H1 (cell line): ENCODE measurements at regions of chr19 and their contacts with region 1.

Region 1: GRCh38 chr19:9934132-9934950 is 2.0 kb downstream of the OLFM2 start:
- DNase-seq: peak; percentile 77 to 100
- H3K4me3 ChIP-seq: peak overlapping the region; percentile 67 to 83 (median 80); a peak in 5 of 8 replicates
- H3K27ac ChIP-seq: no peak overlapping the region
- H3K4me1 ChIP-seq: peaks cover 4 to 14% (median 6%) of the 10 kb centered on the region in 4 experiments
- H3K27me3 ChIP-seq: peaks cover 0 to 2% (median 0%) of the 10 kb centered on the region in 4 experiments; a peak in 2 of 7 replicates
- CTCF ChIP-seq: peak; percentile 94 to 97 (median 96)
- EP300 ChIP-seq: no peak; a peak in 1 of 3 replicates
- POLR2A ChIP-seq: 0 out of 3 replicates have a peak, but pooled peaks of 1 of the 2 experiments have one; percentile 29
- RAD21 ChIP-seq: peak; percentile 96 to 98

Region 2: DNA sequence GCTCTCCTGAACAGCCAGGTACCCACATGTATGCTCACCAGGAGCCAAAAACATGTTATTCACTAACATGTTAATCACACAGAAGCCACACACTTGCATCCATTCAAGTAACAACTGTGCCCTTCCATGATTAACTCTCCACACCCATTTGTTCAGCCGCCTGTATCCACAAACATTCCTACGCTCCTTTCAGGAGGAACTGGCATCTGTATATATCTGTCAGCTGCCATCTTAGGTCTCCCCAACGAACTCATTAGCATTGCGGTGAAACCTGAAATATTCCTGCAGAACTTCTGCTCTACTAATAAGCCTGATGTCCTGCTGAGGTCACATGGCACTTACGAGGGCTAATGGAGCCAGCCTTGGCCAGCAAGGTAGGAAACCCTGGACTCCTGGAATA is 31.0 kb before region 1 on chr19:
- CTCF ChIA-PET with region 1: no interaction called
- POLR2A ChIA-PET with region 1: no interaction called
- DNase-seq: no peak
- H3K4me3 ChIP-seq: no peak overlapping the region
- H3K27ac ChIP-seq: no peak overlapping the region
- H3K4me1 ChIP-seq: peaks cover 0 to 8% (median 6%) of the 10 kb centered on the region in 4 experiments; a peak in 4 of 7 replicates
- H3K27me3 ChIP-seq: no peaks in the 10 kb centered on the region
- CTCF ChIP-seq: no peak
- EP300 ChIP-seq: no peak
- POLR2A ChIP-seq: no peak
- RAD21 ChIP-seq: no peak

Region 3: DNA sequence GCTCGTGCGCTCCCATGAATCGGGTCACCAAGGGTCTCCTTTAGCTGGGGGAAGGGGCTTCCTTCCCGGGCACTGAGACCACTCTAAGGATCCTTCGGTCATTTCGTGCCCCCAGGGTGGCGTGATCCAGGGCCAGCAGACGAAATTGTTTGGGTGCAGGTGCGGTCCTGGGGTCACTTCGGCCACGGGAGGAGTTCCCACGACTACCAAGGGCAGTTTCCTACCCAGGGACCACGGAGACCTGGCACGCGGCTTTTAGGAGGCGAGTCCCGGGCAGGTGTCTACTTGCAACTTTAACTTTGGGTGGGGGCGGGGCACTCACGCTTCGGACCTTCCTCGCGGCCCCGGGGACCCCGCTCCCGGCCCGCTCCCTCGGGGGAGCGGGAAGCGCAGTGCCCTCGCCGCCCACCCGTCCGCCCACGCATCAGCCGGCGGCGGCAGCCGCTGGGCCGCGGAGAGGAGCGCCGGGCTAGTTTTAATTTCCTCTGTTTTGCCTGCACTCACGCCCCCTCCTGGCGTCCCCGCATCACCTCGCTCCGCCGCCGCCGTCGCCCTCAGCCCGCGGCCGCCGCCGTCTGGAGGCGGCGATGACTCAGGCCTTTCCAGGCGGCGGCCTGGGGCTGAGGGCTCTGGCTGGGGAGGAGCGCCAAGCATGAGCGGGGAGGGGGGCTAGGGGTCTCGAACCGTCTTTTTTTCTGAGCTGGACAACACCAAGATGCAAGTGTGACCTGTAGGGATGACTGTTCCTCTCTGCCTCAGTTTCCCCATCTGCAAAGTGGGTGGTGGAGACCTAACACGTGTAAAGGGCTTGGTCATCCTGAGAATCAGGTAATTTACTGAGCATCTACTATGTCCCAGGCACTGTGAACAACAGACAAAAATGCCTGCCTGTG is 19.8 kb before region 1 on chr19:
- CTCF ChIA-PET with region 1: interaction called, 24 read pairs
- POLR2A ChIA-PET with region 1: interaction called, 4 read pairs
- DNase-seq: peak in 1 of 2 experiments; percentile 90
- H3K4me3 ChIP-seq: peak overlapping the region; percentile 37 to 78 (median 42)
- H3K27ac ChIP-seq: peak overlapping the region; percentile 46; the same call in 1 of the 2 replicates
- H3K4me1 ChIP-seq: peaks cover 0 to 13% (median 5%) of the 10 kb centered on the region in 4 experiments; a peak in 6 of 7 replicates
- H3K27me3 ChIP-seq: peaks cover 0 to 9% (median 2%) of the 10 kb centered on the region in 4 experiments; a peak in 4 of 7 replicates
- CTCF ChIP-seq: peak; percentile 55 to 87 (median 82)
- EP300 ChIP-seq: peak in 1 of 2 experiments; percentile 78; a peak in 1 of 3 replicates
- POLR2A ChIP-seq: no peak
- RAD21 ChIP-seq: peak; percentile 48 to 60; a peak in 3 of 4 replicates

Region 4: GRCh38 chr19:9986787-9987281 is 52.5 kb after region 1 on chr19:
- CTCF ChIA-PET with region 1: interaction called, 11 read pairs
- POLR2A ChIA-PET with region 1: interaction called, 3 read pairs
- DNase-seq: no peak
- H3K4me3 ChIP-seq: no peak overlapping the region
- H3K27ac ChIP-seq: no peak overlapping the region
- H3K4me1 ChIP-seq: peaks cover 0 to 4% (median 2%) of the 10 kb centered on the region in 4 experiments; a peak in 3 of 7 replicates
- H3K27me3 ChIP-seq: no peaks in the 10 kb centered on the region
- CTCF ChIP-seq: no peak
- EP300 ChIP-seq: no peak
- POLR2A ChIP-seq: no peak
- RAD21 ChIP-seq: no peak

Region 5: GRCh38 chr19:10007371-10008183 is 73.2 kb after region 1 on chr19:
- CTCF ChIA-PET with region 1: interaction called, 82 read pairs
- POLR2A ChIA-PET with region 1: interaction called, 4 read pairs
- DNase-seq: no peak
- H3K4me3 ChIP-seq: no peak overlapping the region
- H3K27ac ChIP-seq: no peak overlapping the region
- H3K4me1 ChIP-seq: peaks cover 4 to 12% (median 8%) of the 10 kb centered on the region in 4 experiments
- H3K27me3 ChIP-seq: peaks cover 1 to 29% (median 20%) of the 10 kb centered on the region in 4 experiments
- CTCF ChIP-seq: no peak
- EP300 ChIP-seq: no peak
- POLR2A ChIP-seq: no peak
- RAD21 ChIP-seq: no peak

Region 6: DNA sequence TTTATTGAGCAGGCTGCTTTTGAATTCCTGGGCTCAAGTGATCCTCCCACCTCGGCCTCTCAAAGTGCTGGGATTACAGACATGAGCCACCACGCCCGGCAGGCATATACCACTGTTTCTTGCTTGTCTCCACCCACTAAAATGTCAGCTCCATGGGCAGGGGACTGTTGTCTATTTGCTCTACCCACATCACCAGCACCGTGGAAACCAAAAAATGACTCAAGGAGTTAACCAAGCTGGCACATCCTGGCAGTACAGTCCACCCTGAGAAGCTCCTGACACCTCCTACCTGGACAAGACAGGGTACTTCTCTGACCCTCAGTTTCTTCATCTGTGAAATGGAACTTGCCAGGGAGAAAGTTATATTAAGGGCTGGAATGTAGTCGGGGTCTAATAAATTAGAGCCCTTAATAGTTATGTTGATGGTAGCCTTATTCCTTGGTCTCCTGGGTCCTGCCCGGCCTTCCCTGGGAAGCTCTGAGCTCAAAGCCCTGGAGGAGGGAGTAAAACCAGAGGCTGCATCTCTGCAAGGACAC is 92.9 kb after region 1 on chr19:
- CTCF ChIA-PET with region 1: interaction called, 54 read pairs
- POLR2A ChIA-PET with region 1: interaction called, 3 read pairs
- DNase-seq: no peak
- H3K4me3 ChIP-seq: peak overlapping the region in 3 of 4 experiments; percentile 9 to 46 (median 16); a peak in 3 of 8 replicates
- H3K27ac ChIP-seq: no peak overlapping the region
- H3K4me1 ChIP-seq: no peaks in the 10 kb centered on the region
- H3K27me3 ChIP-seq: peaks cover 0 to 3% (median 0%) of the 10 kb centered on the region in 4 experiments; a peak in 1 of 7 replicates
- CTCF ChIP-seq: no peak
- EP300 ChIP-seq: no peak
- POLR2A ChIP-seq: no peak
- RAD21 ChIP-seq: no peak

Region 7: GRCh38 chr19:10095948-10096621 is 161.7 kb after region 1 on chr19:
- CTCF ChIA-PET with region 1: interaction called, 14 read pairs
- POLR2A ChIA-PET with region 1: no interaction called
- DNase-seq: peak; percentile 79 to 96
- H3K4me3 ChIP-seq: peak overlapping the region; percentile 29 to 57 (median 39)
- H3K27ac ChIP-seq: no peak overlapping the region
- H3K4me1 ChIP-seq: peaks cover 0 to 6% (median 2%) of the 10 kb centered on the region in 4 experiments; a peak in 3 of 7 replicates
- H3K27me3 ChIP-seq: peaks cover 8 to 29% (median 23%) of the 10 kb centered on the region in 4 experiments
- CTCF ChIP-seq: 0 out of 4 replicates have a peak, but pooled peaks of 1 of the 3 experiments have one; percentile 6
- EP300 ChIP-seq: no peak
- POLR2A ChIP-seq: peak in 1 of 2 experiments; percentile 71; a peak in 2 of 3 replicates
- RAD21 ChIP-seq: no peak